Right cardiac atrium (tissue), 5 donors: ENCODE measurements at regions of chr22 and their contacts with region 1.

Region 1: DNA sequence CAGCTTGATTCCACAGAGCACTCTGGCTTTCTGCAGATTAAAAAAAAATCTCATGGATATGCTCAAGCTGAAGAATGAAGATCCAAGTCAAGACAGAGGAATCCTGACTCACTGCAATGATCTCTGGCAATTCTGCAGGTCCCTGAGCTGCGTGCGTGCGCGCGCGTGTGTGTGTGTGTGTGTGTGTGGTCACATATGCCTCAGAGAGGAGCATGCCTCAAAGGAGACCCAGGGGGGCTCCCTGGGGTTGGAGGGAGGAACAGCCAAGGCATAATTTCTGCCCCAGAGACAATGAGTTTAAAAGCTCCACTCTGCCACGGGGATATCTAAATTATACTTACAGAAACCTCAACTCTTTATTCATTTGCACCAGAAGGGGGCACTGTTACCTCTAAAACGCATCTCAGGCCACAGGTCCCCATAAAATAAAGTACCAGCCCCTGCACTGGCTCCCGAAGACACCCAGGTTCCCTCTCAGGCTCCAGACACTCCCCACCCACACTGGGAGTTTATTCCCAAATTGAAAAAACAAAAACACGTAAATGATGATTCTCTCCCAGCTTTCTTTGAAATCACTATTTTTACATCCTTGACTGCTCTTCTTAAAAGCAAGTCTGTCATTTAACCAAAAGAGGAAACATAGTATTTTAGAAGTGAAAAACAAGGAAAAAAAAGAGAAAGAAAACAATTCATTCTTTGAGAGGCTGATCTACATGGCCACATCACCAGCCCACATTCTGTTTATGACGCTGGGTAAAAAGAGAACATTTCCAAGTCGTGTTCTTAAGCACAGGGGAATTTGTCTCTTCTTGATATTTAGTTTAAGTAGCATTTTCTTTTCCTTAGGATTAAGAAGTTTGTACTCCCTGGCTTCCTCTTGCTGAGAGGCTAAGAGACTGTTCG is 401.0 kb downstream of the LARGE1 start:
- DNase-seq: no peak
- ATAC-seq: peak; percentile 62 to 67
- H3K4me3 ChIP-seq: no peak overlapping the region
- H3K27ac ChIP-seq: no peak overlapping the region
- H3K4me1 ChIP-seq: no peaks in the 10 kb centered on the region
- H3K27me3 ChIP-seq: no peaks in the 10 kb centered on the region

Region 2: GRCh38 chr22:33579448-33580093 is 60.2 kb after region 1 on chr22:
- intact Hi-C with region 1: loop called (anchors 5 to 10 kb)
- DNase-seq: peak; percentile 39 to 81 (median 74)
- ATAC-seq: peak; percentile 87 to 89
- H3K4me3 ChIP-seq: no peak overlapping the region
- H3K27ac ChIP-seq: no peak overlapping the region
- H3K4me1 ChIP-seq: no peaks in the 10 kb centered on the region
- H3K27me3 ChIP-seq: no peaks in the 10 kb centered on the region

Region 3: DNA sequence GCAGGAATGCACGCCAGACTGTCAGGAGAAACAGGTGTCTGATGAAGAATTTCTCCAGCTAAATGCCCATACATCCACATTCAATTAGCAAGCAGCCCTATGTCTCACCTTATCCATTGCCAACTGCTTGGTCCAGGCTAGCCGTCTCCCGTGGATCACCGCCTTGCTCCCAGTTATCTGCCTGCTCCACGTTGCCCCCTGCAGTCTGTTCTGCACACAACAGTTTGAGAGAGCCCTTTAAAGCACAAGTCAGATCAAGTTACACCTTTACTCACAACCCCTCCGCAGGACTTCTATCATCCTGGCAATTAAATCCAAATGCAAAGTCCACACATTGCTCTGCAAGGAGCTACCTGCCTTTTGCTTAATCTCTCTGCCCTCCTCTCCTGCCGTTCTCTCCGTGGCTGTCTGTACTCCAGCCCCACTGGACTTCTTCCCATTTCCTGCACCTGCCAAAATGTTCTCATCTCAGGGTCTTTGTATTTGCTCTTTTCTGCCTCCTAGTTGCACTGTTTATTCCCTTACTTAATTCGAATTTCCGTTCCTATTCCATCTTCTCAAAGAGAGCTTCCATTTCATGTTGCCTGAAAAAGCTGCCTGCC is 586.2 kb after region 1 on chr22:
- intact Hi-C with region 1: loop called in 2 of 4 experiments (anchors 5 to 10 kb)
- DNase-seq: peak; percentile 49 to 81 (median 71)
- ATAC-seq: peak; percentile 63 to 68
- H3K4me3 ChIP-seq: no peak overlapping the region
- H3K27ac ChIP-seq: no peak overlapping the region
- H3K4me1 ChIP-seq: no peaks in the 10 kb centered on the region
- H3K27me3 ChIP-seq: peaks cover 2% of the 10 kb centered on the region

Region 4: GRCh38 chr22:34111210-34111824 is 592.0 kb after region 1 on chr22:
- intact Hi-C with region 1: loop called in 2 of 4 experiments (anchors 5 to 10 kb)
- DNase-seq: peak in 1 of 3 donors; percentile 43
- ATAC-seq: peak; percentile 47 to 66
- H3K4me3 ChIP-seq: no peak overlapping the region
- H3K27ac ChIP-seq: no peak overlapping the region
- H3K4me1 ChIP-seq: no peaks in the 10 kb centered on the region
- H3K27me3 ChIP-seq: no peaks in the 10 kb centered on the region